Thyroid gland (tissue), 4 donors: ENCODE measurements at regions of chr14 and their contacts with region 1.

Region 1: DNA sequence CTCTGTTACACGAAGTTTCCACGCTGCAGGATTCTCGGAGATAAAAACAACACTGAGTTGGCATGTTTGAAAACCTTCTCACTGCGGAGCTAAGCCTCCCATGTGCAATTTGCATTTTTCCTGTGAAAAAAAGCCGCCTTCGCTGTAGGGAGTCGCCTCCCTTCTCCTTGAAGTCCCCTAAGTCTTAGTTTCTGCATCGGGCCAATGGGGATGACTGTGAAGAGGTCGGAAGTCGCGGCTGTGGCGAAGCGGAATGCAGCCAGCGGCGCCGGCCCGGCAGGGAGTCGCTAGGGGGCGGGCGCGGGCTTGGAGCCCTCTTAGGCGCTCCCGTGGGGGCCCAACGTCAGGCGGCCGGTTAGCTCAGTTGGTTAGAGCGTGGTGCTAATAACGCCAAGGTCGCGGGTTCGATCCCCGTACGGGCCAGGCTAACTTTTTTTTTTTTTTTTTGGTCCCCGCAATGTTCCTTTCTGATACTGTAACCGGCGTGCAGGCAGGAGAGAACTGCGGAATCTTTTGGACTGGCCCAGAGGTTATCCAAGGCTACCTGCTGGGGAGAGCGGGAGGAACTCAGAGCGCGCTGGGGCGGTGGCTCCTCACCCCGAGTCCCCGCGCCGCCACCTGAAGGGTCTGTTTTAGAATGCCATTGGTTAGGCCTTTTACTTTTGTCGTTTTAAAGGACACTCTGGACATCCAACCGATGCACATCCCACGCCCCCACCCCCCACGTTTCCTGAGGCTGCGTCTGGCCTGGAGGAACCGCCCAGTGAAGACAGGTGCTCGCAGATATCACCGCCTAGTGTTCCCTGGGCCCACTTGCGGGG is 2.6 kb upstream of the ZNF839 start:
- DNase-seq: peak; percentile 92 to 94
- H3K4me3 ChIP-seq: peak overlapping the region in 2 of 3 donors; percentile 37 to 38
- H3K27ac ChIP-seq: peak overlapping the region; percentile 77 to 95 (median 87)
- H3K4me1 ChIP-seq: peaks cover 22 to 38% of the 10 kb centered on the region in 2 donors
- H3K27me3 ChIP-seq: no peaks in the 10 kb centered on the region
- CTCF ChIP-seq: peak; percentile 26 to 95 (median 68)
- POLR2A ChIP-seq: peak in 1 of 2 donors; percentile 51

Region 2: GRCh38 chr14:102046343-102047278 is 270.3 kb before region 1 on chr14:
- intact Hi-C with region 1: loop called (anchors 10 kb)
- DNase-seq: peak; percentile 99
- H3K4me3 ChIP-seq: no peak overlapping the region
- H3K27ac ChIP-seq: peak overlapping the region in 2 of 3 donors; percentile 24 to 52
- H3K4me1 ChIP-seq: peaks cover 6 to 12% of the 10 kb centered on the region in 2 donors
- H3K27me3 ChIP-seq: no peaks in the 10 kb centered on the region
- CTCF ChIP-seq: peak in 5 of 6 experiments; percentile 22 to 91 (median 60)
- POLR2A ChIP-seq: no peak

Region 3: GRCh38 chr14:102235275-102235897 is 81.6 kb before region 1 on chr14:
- intact Hi-C with region 1: loop called (anchors 2 kb)
- DNase-seq: peak; percentile 86 to 92
- H3K4me3 ChIP-seq: no peak overlapping the region
- H3K27ac ChIP-seq: no peak overlapping the region
- H3K4me1 ChIP-seq: peaks cover 3 to 4% of the 10 kb centered on the region in 2 donors
- H3K27me3 ChIP-seq: no peaks in the 10 kb centered on the region
- CTCF ChIP-seq: peak; percentile 46 to 86 (median 80)
- POLR2A ChIP-seq: no peak

Region 4: DNA sequence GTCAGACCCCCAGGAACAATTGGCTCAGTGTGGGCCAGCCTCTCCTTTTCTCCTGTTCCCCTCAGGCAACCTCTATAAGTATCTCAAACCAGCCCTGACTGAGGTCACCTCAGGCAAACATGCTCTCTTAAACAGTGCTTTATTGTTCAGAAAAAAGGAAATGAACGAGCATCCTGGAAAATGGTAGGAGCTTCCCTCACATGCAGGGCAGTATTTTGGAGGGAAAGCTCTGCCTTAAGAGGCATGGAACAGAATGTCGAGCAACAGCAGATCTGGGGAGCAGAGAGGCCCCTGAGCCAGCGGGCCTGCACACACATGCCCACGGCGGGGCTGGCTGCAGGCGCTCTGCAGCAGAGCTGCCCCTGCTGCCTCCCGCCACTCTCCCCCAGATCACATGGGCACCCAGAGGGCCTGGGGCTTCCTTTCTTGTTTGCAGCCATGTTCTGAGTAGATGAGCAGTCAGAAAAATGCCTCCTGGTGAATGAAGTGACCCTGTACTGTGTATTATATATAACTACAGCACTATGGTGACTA is 54.0 kb before region 1 on chr14:
- intact Hi-C with region 1: no loop called
- DNase-seq: no peak
- H3K4me3 ChIP-seq: no peak overlapping the region
- H3K27ac ChIP-seq: no peak overlapping the region
- H3K4me1 ChIP-seq: no peaks in the 10 kb centered on the region
- H3K27me3 ChIP-seq: no peaks in the 10 kb centered on the region
- CTCF ChIP-seq: no peak
- POLR2A ChIP-seq: no peak